Posterior cingulate gyrus (tissue), 11 donors: ENCODE measurements at regions of chr11 and their contacts with region 1.

Region 1: GRCh38 chr11:44029977-44030911 is 17.5 kb upstream of the ACCSL start:
- DNase-seq: no peak

Region 2: DNA sequence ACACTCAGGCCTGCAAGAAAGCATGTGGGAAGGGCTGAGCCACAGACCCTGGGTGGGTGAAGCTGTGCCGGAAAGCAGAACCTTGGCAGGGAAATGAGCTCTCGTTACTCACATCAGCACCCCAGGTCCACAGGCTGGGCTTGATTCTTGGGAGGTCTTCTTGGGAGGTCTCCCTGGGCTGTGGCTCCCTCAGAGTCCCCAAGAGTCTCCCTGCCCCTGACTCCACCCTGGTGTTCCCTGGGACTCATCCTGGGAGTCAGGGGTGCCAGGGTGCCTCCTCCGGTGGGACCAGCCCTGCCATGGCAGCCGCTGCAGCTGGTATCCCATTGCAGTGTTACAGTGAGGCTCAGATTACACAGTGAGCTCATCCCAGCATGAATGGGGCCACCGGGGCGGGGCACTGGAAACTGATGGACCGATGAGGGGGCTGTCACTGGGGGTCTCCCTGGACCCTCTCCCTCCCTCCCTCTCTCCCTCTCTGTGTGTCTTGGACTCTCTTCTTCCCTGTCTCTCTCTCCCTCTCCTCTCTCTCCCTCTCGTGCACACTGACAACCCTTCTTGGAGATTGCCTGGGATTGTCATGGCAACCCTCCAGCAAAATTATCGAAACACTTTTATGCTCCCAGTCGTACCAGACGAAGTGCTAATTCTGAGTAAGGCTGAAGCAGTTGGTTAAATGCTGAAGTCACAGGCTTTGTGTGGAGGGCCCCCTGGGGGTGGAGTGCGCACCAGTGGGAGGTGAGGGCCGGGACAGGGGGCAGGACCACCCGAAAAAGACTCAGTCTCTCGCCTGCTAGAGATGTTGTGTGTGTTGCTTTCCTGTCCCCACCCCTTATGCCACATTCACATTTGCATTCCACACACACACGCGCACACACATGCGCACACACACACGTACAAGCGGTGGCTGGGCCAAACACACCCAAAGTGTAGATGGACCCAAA is 96.4 kb before region 1 on chr11:
- intact Hi-C with region 1: no loop called
- DNase-seq: peak in 1 of 10 donors; percentile 83

Region 3: DNA sequence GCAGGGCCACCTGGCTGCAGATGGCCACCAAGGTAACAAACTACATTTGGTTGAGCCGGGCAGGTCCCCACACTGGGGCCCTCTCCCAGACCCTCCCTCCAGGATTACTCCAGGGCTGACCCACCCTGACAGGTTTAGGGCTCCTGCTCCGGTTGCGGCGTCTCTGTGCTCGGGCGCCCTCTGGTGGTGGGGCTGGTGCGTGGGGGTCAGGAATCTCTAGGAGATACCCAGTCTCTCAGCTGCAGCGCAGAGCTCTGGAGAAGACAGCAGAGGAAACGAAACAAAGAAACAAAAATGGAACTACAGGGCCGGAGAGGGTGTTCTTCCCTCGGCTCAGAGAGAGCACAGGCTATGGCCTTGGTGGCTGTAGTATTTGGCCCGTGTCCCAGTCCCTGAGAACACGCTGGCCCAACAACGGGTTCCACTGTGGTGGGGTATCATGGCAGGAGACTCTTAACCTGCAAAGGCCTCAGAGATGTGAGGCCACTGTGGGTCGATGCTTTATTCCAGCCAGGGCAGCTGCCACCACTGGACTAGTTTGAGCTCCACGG is 85.4 kb before region 1 on chr11:
- intact Hi-C with region 1: loop called (anchors 5 kb)
- DNase-seq: peak in 8 of 10 donors; percentile 54 to 94 (median 79)

Region 4: GRCh38 chr11:43987384-43988039 is 42.7 kb before region 1 on chr11:
- intact Hi-C with region 1: loop called (anchors 1 kb)
- DNase-seq: peak in 7 of 10 donors; percentile 29 to 90 (median 45)

Region 5: DNA sequence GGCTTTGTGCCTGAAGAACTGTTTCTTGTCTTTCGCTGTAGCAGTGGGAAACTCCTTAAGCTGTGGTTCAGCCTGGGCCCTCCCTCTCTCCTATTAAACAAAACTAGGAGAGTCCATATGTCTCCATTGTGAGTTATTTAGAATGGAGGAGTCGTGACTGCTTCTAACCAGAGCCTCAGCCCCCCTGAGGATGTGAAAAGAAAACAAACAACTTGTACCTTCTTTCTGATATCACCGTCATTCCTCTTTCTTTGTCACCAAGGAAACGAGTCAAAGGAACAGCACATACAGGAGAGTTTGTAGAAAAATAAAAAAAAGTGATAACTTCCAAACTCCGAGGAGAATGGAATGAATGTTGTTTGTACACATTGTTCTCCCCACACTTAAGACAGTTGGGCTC is 53.7 kb after region 1 on chr11:
- intact Hi-C with region 1: no loop called
- DNase-seq: no peak

Region 6: GRCh38 chr11:44277196-44278090 is 247.2 kb after region 1 on chr11:
- intact Hi-C with region 1: no loop called
- DNase-seq: no peak

Region 7: DNA sequence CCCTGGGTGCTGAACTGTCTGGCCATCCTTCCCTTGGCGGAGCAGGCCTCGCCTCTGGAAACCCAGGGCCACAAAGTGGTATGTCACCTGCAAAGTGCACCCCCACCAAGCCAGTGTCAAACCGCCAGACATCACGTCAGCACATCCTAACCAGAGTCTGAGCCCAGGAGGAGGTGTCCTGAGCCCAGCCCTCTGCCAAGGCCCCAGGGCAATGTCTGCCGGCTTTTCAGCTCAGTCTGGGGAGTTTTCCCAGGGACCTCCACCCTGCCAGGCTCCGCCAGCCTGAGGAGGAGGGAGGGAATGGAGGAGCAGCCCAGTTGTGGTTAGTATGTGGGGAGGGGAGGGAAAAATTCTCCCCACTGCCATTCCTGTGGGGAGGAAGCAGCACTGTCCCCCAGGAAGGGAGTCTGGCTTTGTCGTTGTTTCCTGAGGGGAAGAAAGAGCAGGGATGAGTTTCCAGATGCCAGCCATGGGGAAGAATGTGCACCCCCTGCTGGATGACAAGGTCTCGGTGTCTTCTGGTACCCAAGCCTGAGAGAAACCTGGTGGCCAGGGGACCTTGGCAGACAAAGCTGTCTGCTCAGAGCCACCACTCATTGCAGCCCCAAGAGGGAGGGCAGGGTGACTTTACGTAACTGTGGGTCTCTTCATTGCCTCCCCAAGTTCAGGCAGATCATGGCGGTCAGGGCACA is 453.8 kb after region 1 on chr11:
- intact Hi-C with region 1: no loop called
- DNase-seq: peak in 1 of 10 donors; percentile 3